ENCODE measurements at regions of chr11 and their contacts with region 1.

Region 1: DNA sequence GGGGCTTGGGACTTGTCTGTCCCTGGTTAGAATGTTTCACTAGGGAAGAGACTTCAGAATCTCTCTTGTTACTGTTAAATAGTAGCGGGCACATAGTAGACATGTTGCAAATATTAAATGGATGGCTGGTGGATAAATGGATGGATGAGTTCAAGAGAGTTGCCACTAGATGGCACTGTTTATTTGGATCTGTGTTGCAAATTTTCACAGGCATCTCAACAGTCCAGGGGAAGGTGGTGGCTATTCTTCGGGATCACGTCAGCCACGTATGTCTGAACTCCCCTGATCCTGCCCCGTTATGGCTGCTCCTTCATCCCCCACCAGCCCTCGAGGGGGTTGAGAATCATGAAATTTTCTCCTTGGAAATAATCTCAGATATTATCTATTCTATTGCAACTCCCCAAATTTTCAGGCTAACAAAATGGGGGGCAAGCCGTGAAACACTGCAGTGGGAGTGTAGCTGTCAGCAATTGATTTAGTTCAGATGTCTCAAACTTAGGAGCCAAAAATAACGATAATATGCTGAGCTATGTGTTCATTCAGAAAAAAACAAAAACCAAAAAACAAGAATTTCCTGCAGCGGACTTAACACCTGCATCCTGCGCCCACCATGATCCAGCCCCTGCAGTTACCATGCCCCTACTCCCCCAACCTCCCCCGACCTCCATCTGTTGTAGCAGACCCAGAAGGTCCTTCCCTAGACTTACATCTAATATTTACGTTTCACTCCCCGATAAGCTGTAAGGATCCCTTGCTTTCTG is 29.1 kb upstream of the BIRC3 start:
- DNase-seq: no peak
- ATAC-seq: peak; percentile 84
- H3K4me3 Mint-ChIP-seq: peak overlapping the region; percentile 74
- H3K27ac Mint-ChIP-seq: peak overlapping the region; percentile 57
- H3K4me1 Mint-ChIP-seq: peaks cover 37% of the 10 kb centered on the region
- H3K27me3 Mint-ChIP-seq: no peaks in the 10 kb centered on the region
- CTCF ChIP-seq: no peak

Region 2: GRCh38 chr11:102097186-102097585 is 191.0 kb before region 1 on chr11:
- CTCF ChIA-PET with region 1: no interaction called
- POLR2A ChIA-PET with region 1: no interaction called
- intact Hi-C with region 1: no loop called
- DNase-seq: no peak
- ATAC-seq: no peak
- H3K4me3 Mint-ChIP-seq: no peak overlapping the region
- H3K27ac Mint-ChIP-seq: no peak overlapping the region
- H3K4me1 Mint-ChIP-seq: no peaks in the 10 kb centered on the region
- H3K27me3 Mint-ChIP-seq: no peaks in the 10 kb centered on the region
- CTCF ChIP-seq: no peak

Region 3: GRCh38 chr11:102317099-102317767 is 29.1 kb after region 1 on chr11 and contains the start of gene BIRC3:
- CTCF ChIA-PET with region 1: interaction called, 167 read pairs
- POLR2A ChIA-PET with region 1: interaction called, 424 read pairs
- intact Hi-C with region 1: loop called (anchors 1 kb)
- DNase-seq: peak; percentile 82
- ATAC-seq: peak; percentile 84
- H3K4me3 Mint-ChIP-seq: peak within 1 kb of the TSS; percentile 98
- H3K27ac Mint-ChIP-seq: peak within 1 kb of the TSS; percentile 98
- H3K4me1 Mint-ChIP-seq: peaks cover 77% of the 10 kb centered on the region
- H3K27me3 Mint-ChIP-seq: no peaks in the 10 kb centered on the region
- CTCF ChIP-seq: no peak
- total RNA-seq, gene BIRC3: 236 and 270 TPM in 2 replicates

Region 4: GRCh38 chr11:102323542-102324251 is 35.6 kb after region 1 on chr11:
- CTCF ChIA-PET with region 1: interaction called, 167 read pairs
- POLR2A ChIA-PET with region 1: interaction called, 424 read pairs
- intact Hi-C with region 1: loop called (anchors 1 kb)
- DNase-seq: no peak
- ATAC-seq: no peak
- H3K4me3 Mint-ChIP-seq: no peak overlapping the region
- H3K27ac Mint-ChIP-seq: peak overlapping the region; percentile 30
- H3K4me1 Mint-ChIP-seq: peaks cover 69% of the 10 kb centered on the region
- H3K27me3 Mint-ChIP-seq: no peaks in the 10 kb centered on the region
- CTCF ChIP-seq: no peak

Region 5: DNA sequence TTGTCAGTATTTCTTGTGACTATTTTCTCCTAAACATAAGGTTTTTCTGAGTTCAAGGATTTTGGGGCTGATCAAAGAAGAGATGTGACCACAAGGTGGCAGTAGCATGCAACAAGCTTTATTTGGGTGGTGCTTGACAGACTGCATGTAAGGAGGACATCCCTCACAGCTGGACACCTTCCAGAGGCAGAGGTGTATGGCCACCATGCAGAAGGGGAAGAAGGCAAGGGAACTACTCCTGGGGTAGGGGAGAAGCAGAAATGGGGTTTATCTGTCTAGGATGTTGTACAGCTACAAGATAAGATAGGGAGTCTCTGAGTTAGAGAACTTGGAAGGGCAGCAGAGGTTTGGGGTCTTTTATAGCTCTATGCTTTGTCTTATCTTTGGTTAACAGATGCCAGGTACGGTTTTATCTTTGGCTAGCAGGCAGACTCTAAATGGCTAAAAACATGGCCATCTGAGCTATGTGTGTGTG is 53.7 kb after region 1 on chr11:
- CTCF ChIA-PET with region 1: interaction called, 36 read pairs
- POLR2A ChIA-PET with region 1: interaction called, 7 read pairs
- intact Hi-C with region 1: loop called (anchors 1 kb)
- DNase-seq: no peak
- ATAC-seq: peak; percentile 37
- H3K4me3 Mint-ChIP-seq: no peak overlapping the region
- H3K27ac Mint-ChIP-seq: peak overlapping the region; percentile 42
- H3K4me1 Mint-ChIP-seq: peaks cover 29% of the 10 kb centered on the region
- H3K27me3 Mint-ChIP-seq: no peaks in the 10 kb centered on the region
- CTCF ChIP-seq: peak; percentile 50

Region 6: GRCh38 chr11:102383839-102384238 is 95.7 kb after region 1 on chr11:
- CTCF ChIA-PET with region 1: no interaction called
- POLR2A ChIA-PET with region 1: no interaction called
- intact Hi-C with region 1: no loop called
- DNase-seq: no peak
- ATAC-seq: no peak
- H3K4me3 Mint-ChIP-seq: no peak overlapping the region
- H3K27ac Mint-ChIP-seq: no peak overlapping the region
- H3K4me1 Mint-ChIP-seq: peaks cover 2% of the 10 kb centered on the region
- H3K27me3 Mint-ChIP-seq: no peaks in the 10 kb centered on the region
- CTCF ChIP-seq: no peak

Region 7: DNA sequence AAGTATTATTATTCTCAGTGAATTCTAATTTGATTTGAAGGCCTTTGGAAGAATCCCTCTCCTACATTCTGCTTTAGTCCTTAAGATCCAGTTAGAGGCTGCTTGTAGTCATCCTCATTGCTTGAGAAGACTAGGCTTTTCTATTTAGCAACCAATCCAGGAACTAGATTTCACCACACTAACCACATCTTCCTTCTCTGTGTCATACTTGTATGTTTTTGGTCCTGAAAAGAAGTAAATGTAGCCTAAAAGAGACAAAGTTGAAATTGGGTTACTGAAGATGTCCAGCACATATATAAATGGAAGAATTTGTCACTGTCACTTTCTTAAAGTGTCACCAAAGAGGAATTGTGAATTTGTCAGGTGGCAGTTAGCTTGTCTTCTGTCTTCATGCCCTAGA is 289.0 kb after region 1 on chr11:
- CTCF ChIA-PET with region 1: no interaction called
- POLR2A ChIA-PET with region 1: no interaction called
- intact Hi-C with region 1: no loop called
- DNase-seq: no peak
- ATAC-seq: no peak
- H3K4me3 Mint-ChIP-seq: no peak overlapping the region
- H3K27ac Mint-ChIP-seq: no peak overlapping the region
- H3K4me1 Mint-ChIP-seq: peaks cover 42% of the 10 kb centered on the region
- H3K27me3 Mint-ChIP-seq: no peaks in the 10 kb centered on the region
- CTCF ChIP-seq: no peak

Measured in activated B cell treated with CpG ODN at 0.5 μM for 24 hours (primary cell).